Heart right ventricle (tissue), 16 donors: ENCODE measurements at regions of chr1 and their contacts with region 1.

Region 1: DNA sequence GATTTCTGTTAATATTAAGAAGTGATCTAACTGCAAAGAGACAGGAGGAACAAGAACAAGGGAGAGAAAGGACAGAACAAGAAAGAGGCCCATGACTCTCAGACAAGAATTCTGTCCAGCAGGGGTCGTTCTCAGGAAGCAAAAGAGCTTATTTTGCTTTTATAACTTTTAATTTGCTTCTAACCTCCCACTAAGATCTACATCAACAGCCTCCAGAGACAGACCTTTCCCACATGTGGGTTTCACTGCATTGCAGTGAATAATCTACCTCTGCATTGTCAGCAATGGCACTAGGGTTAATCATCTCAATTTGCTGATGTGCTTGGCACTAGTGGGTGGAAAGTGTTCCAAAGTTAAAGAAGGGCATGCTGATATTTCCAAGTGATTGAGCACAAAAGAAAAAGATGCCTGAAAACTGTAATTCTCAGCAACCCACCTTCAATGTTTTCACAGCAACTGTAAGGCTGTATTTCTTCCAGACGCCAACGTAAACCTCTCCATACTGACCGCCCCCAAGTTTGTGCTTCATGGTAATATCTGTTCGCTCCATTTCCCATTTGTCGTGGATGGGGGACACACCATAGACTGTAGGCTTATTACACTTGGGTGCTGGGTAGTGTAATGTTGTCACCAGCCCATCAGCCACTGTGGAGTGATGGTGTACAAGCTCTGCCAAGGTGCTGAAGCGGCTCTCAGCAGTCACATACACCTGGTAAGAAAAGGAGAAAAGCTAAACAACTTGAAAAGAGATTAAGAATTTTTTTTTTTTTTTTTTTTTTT is 39.5 kb downstream of the TOR3A start:
- DNase-seq: no peak
- ATAC-seq: peak in 4 of 8 donors; percentile 27 to 61 (median 51)
- H3K4me3 ChIP-seq: no peak overlapping the region
- H3K27ac ChIP-seq: peak overlapping the region in 1 of 10 donors; percentile 2
- H3K4me1 ChIP-seq: peaks cover 0 to 19% (median 4%) of the 10 kb centered on the region in 9 donors
- H3K27me3 ChIP-seq: no peaks in the 10 kb centered on the region
- CTCF ChIP-seq: peak; percentile 35 to 75 (median 63)

Region 2: GRCh38 chr1:179025125-179025974 is 96.0 kb before region 1 on chr1 and contains the start of gene FAM20B:
- intact Hi-C with region 1: no loop called
- DNase-seq: peak; percentile 95 to 96
- ATAC-seq: peak; percentile 96 to 98 (median 98)
- H3K4me3 ChIP-seq: peak within 1 kb of the TSS; percentile 91 to 99 (median 98)
- H3K27ac ChIP-seq: peak within 1 kb of the TSS; percentile 90 to 99 (median 96)
- H3K4me1 ChIP-seq: peaks cover 0 to 45% (median 35%) of the 10 kb centered on the region in 9 donors
- H3K27me3 ChIP-seq: no peaks in the 10 kb centered on the region
- CTCF ChIP-seq: no peak
- total RNA-seq, gene FAM20B: 44.5 to 63.4 (median 51.1) TPM

Region 3: GRCh38 chr1:179229214-179230140 is 108.1 kb after region 1 on chr1 and contains the start of gene ABL2:
- intact Hi-C with region 1: loop called in 1 of 10 experiments (anchors 10 kb)
- DNase-seq: peak; percentile 39 to 50
- ATAC-seq: peak; percentile 67 to 92 (median 82)
- H3K4me3 ChIP-seq: peak within 1 kb of the TSS; percentile 62 to 100 (median 98)
- H3K27ac ChIP-seq: peak within 1 kb of the TSS; percentile 52 to 90 (median 86)
- H3K4me1 ChIP-seq: peaks cover 0 to 35% (median 21%) of the 10 kb centered on the region in 9 donors
- H3K27me3 ChIP-seq: no peaks in the 10 kb centered on the region
- CTCF ChIP-seq: no peak
- total RNA-seq, gene ABL2: 7.9 to 14.4 (median 11.3) TPM